ENCODE measurements at regions of chr7 and their contacts with region 1.

Region 1: GRCh38 chr7:35801392-35802101 is 690 bp downstream of the SEPTIN7 start:
- DNase-seq: peak; percentile 43
- ATAC-seq: peak; percentile 45
- H3K4me3 ChIP-seq: peak overlapping the region; percentile 80
- H3K27ac ChIP-seq: peak overlapping the region; percentile 90
- H3K4me1 ChIP-seq: peaks cover 20% of the 10 kb centered on the region
- H3K27me3 ChIP-seq: no peaks in the 10 kb centered on the region
- CTCF ChIP-seq: peak; percentile 69

Region 2: DNA sequence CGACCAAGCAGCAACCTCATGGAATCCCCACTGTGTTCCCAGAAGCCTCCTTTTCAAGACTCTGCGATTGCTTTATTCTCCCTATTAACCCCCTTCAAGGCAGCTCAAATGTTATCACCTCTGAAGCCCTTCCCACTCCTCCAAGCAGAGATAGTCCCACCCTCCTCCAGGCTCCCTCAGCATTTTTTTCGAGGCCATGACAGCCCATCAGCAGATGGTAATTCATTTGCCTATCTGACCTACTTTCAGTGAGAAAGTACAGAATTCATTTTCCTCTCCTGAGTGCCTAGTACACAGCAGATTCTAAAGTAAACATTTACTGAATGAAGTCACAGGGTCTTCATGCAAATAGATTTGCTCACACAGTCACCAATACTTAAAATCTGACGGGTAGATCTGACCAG is 154.4 kb before region 1 on chr7:
- CTCF ChIA-PET with region 1: no interaction called
- POLR2A ChIA-PET with region 1: no interaction called
- intact Hi-C with region 1: no loop called
- DNase-seq: no peak
- ATAC-seq: no peak
- H3K4me3 ChIP-seq: no peak overlapping the region
- H3K27ac ChIP-seq: no peak overlapping the region
- H3K4me1 ChIP-seq: no peaks in the 10 kb centered on the region
- H3K27me3 ChIP-seq: no peaks in the 10 kb centered on the region
- CTCF ChIP-seq: no peak

Region 3: DNA sequence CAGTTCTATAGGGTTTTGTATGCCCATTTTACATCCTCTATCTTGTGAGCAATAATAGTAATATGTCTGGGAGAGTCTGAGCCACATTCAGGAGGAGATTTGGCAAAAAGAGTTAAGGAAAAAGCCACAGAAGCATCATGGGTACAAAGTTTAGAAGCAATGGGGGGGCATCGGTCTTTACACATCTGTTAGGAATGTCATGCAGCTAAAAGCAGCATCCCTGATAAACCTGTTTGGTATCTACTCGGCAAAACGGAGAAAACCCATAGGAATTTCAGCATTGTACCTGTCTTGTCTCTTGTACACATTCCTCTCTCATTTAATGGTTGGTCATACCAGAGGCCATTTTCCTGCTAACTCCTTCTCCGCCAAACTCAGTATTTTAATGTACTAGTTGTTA is 94.1 kb before region 1 on chr7:
- CTCF ChIA-PET with region 1: interaction called, 6 read pairs
- POLR2A ChIA-PET with region 1: interaction called, 3 read pairs
- intact Hi-C with region 1: loop called (anchors 1 kb)
- DNase-seq: peak; percentile 69
- ATAC-seq: peak; percentile 28
- H3K4me3 ChIP-seq: no peak overlapping the region
- H3K27ac ChIP-seq: no peak overlapping the region
- H3K4me1 ChIP-seq: peaks cover 9% of the 10 kb centered on the region
- H3K27me3 ChIP-seq: no peaks in the 10 kb centered on the region
- CTCF ChIP-seq: no peak

Region 4: DNA sequence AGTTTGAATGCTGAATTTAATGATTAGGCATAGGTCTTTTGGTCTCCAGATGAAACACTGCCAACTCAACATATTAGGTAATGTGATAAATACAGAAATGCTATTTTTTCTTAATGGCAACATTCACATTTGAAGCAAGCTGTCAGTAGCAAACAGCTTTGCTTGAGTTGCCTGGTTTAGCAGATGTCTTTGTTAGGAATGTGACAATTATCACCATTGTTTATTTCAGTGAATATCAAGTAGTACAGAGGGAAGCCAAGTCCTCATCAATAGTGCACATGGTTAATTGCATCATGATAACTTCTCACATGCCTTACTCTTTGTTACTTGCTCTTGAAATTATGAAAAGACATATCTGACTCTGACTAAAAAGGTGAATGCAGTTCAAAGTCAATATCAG is 24.4 kb before region 1 on chr7:
- CTCF ChIA-PET with region 1: interaction called, 10 read pairs
- POLR2A ChIA-PET with region 1: no interaction called
- intact Hi-C with region 1: no loop called
- DNase-seq: no peak
- ATAC-seq: no peak
- H3K4me3 ChIP-seq: no peak overlapping the region
- H3K27ac ChIP-seq: no peak overlapping the region
- H3K4me1 ChIP-seq: no peaks in the 10 kb centered on the region
- H3K27me3 ChIP-seq: no peaks in the 10 kb centered on the region
- CTCF ChIP-seq: no peak

Region 5: GRCh38 chr7:35839860-35840854 is 38.6 kb after region 1 on chr7:
- CTCF ChIA-PET with region 1: no interaction called
- POLR2A ChIA-PET with region 1: interaction called, 6 read pairs
- intact Hi-C with region 1: loop called (anchors 2 kb)
- DNase-seq: peak; percentile 48
- ATAC-seq: peak; percentile 97
- H3K4me3 ChIP-seq: no peak overlapping the region
- H3K27ac ChIP-seq: no peak overlapping the region
- H3K4me1 ChIP-seq: no peaks in the 10 kb centered on the region; the same call in 1 of the 2 replicates
- H3K27me3 ChIP-seq: no peaks in the 10 kb centered on the region
- CTCF ChIP-seq: peak; percentile 21; the same call in 1 of the 2 replicates

Region 6: GRCh38 chr7:35906191-35906908 is 104.8 kb after region 1 on chr7:
- CTCF ChIA-PET with region 1: no interaction called
- POLR2A ChIA-PET with region 1: no interaction called
- intact Hi-C with region 1: loop called (anchors 1 kb)
- DNase-seq: peak; percentile 81
- ATAC-seq: peak; percentile 91
- H3K4me3 ChIP-seq: no peak overlapping the region
- H3K27ac ChIP-seq: no peak overlapping the region
- H3K4me1 ChIP-seq: no peaks in the 10 kb centered on the region
- H3K27me3 ChIP-seq: no peaks in the 10 kb centered on the region
- CTCF ChIP-seq: peak; percentile 88

Measured in PC-3 (cell line).